ENCODE measurements at regions of chr1 and their contacts with region 1.

Region 1: DNA sequence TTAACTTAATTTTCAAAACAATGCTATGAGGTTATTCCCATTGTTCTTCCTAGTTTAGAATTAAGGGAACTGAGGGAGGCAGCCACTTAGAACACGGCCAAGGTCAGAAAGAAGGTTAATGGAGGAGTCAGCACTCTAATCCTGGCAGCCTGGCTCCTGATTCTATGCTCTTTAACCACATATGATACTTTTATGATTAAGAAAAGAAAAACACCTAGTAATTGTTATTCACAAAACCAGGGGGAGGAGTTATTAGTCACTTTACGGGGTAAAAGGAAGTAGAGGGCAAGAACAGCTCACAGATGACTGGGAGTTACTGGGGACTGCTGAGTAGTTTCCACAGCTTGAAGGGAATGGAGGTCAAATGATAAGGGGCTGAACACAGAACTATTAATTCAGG is 38.6 kb downstream of the GADD45A start:
- DNase-seq: peak; percentile 31
- H3K4me3 Mint-ChIP-seq: no peak overlapping the region
- H3K27ac Mint-ChIP-seq: no peak overlapping the region
- H3K4me1 Mint-ChIP-seq: peaks cover 9% of the 10 kb centered on the region
- H3K27me3 Mint-ChIP-seq: no peaks in the 10 kb centered on the region

Region 2: GRCh38 chr1:67700692-67701410 is 22.8 kb before region 1 on chr1:
- CTCF ChIA-PET with region 1: interaction called, 4 read pairs
- POLR2A ChIA-PET with region 1: interaction called, 4 read pairs
- intact Hi-C with region 1: loop called (anchors 1 kb)
- DNase-seq: peak; percentile 40
- H3K4me3 Mint-ChIP-seq: no peak overlapping the region
- H3K27ac Mint-ChIP-seq: peak overlapping the region; percentile 15
- H3K4me1 Mint-ChIP-seq: peaks cover 13% of the 10 kb centered on the region
- H3K27me3 Mint-ChIP-seq: no peaks in the 10 kb centered on the region

Region 3: GRCh38 chr1:67735806-67736627 is 12.4 kb after region 1 on chr1:
- CTCF ChIA-PET with region 1: no interaction called
- POLR2A ChIA-PET with region 1: no interaction called
- intact Hi-C with region 1: loop called (anchors 1 kb)
- DNase-seq: peak; percentile 77
- H3K4me3 Mint-ChIP-seq: peak overlapping the region; percentile 50
- H3K27ac Mint-ChIP-seq: peak overlapping the region; percentile 52
- H3K4me1 Mint-ChIP-seq: peaks cover 12% of the 10 kb centered on the region
- H3K27me3 Mint-ChIP-seq: no peaks in the 10 kb centered on the region

Region 4: GRCh38 chr1:67748630-67749029 is 25.0 kb after region 1 on chr1:
- CTCF ChIA-PET with region 1: no interaction called
- POLR2A ChIA-PET with region 1: no interaction called
- intact Hi-C with region 1: loop called (anchors 1 kb)
- DNase-seq: no peak
- H3K4me3 Mint-ChIP-seq: no peak overlapping the region
- H3K27ac Mint-ChIP-seq: no peak overlapping the region
- H3K4me1 Mint-ChIP-seq: peaks cover 22% of the 10 kb centered on the region
- H3K27me3 Mint-ChIP-seq: peaks cover 1% of the 10 kb centered on the region

Measured in activated CD4-positive, alpha-beta memory T cell treated with anti-CD3 and anti-CD28 coated beads for 36 hours (primary cell).